SK-N-SH (cell line): ENCODE measurements at regions of chr7 and their contacts with region 1.

Region 1: GRCh38 chr7:22110227-22110839 is 164.6 kb upstream of the CDCA7L start:
- DNase-seq: peak; percentile 74
- H3K4me3 ChIP-seq: no peak overlapping the region; a peak in 1 of 4 replicates
- H3K27ac ChIP-seq: no peak overlapping the region
- H3K4me1 ChIP-seq: peaks cover 0 to 7% of the 10 kb centered on the region in 2 experiments; a peak in 1 of 4 replicates
- H3K27me3 ChIP-seq: no peaks in the 10 kb centered on the region
- CTCF ChIP-seq: peak; percentile 99
- EP300 ChIP-seq: no peak
- RAD21 ChIP-seq: peak; percentile 100

Region 2: GRCh38 chr7:21675255-21675654 is 435.1 kb before region 1 on chr7:
- CTCF ChIA-PET with region 1: no interaction called
- POLR2A ChIA-PET with region 1: no interaction called
- DNase-seq: no peak
- H3K4me3 ChIP-seq: no peak overlapping the region
- H3K27ac ChIP-seq: no peak overlapping the region
- H3K4me1 ChIP-seq: no peaks in the 10 kb centered on the region
- H3K27me3 ChIP-seq: no peaks in the 10 kb centered on the region
- CTCF ChIP-seq: no peak
- EP300 ChIP-seq: no peak
- RAD21 ChIP-seq: no peak

Region 3: GRCh38 chr7:22082886-22083703 is 27.2 kb before region 1 on chr7:
- CTCF ChIA-PET with region 1: interaction called, 90 read pairs
- POLR2A ChIA-PET with region 1: no interaction called
- DNase-seq: peak; percentile 97
- H3K4me3 ChIP-seq: peak overlapping the region; percentile 60 to 78
- H3K27ac ChIP-seq: peak overlapping the region; percentile 51 to 56; a peak in 2 of 4 replicates
- H3K4me1 ChIP-seq: peaks cover 0 to 12% of the 10 kb centered on the region in 2 experiments; a peak in 2 of 4 replicates
- H3K27me3 ChIP-seq: peaks cover 9% of the 10 kb centered on the region; the same call in 1 of the 2 replicates
- CTCF ChIP-seq: peak; percentile 98
- EP300 ChIP-seq: no peak; a peak in 1 of 4 replicates
- RAD21 ChIP-seq: peak; percentile 81

Region 4: GRCh38 chr7:22127835-22128527 is 17.6 kb after region 1 on chr7:
- CTCF ChIA-PET with region 1: interaction called, 52 read pairs
- POLR2A ChIA-PET with region 1: no interaction called
- DNase-seq: no peak
- H3K4me3 ChIP-seq: no peak overlapping the region
- H3K27ac ChIP-seq: peak overlapping the region in 1 of 2 experiments; percentile 3; a peak in 3 of 4 replicates
- H3K4me1 ChIP-seq: peaks cover 6 to 20% of the 10 kb centered on the region in 2 experiments; a peak in 3 of 4 replicates
- H3K27me3 ChIP-seq: no peaks in the 10 kb centered on the region
- CTCF ChIP-seq: no peak
- EP300 ChIP-seq: peak in 1 of 2 experiments; percentile 8; a peak in 1 of 4 replicates
- RAD21 ChIP-seq: no peak

Region 5: GRCh38 chr7:22231811-22232210 is 121.5 kb after region 1 on chr7:
- CTCF ChIA-PET with region 1: interaction called, 12 read pairs
- POLR2A ChIA-PET with region 1: no interaction called
- DNase-seq: no peak
- H3K4me3 ChIP-seq: no peak overlapping the region
- H3K27ac ChIP-seq: no peak overlapping the region
- H3K4me1 ChIP-seq: peaks cover 0 to 3% of the 10 kb centered on the region in 2 experiments; a peak in 1 of 4 replicates
- H3K27me3 ChIP-seq: no peaks in the 10 kb centered on the region
- CTCF ChIP-seq: no peak
- EP300 ChIP-seq: no peak
- RAD21 ChIP-seq: no peak

Region 6: DNA sequence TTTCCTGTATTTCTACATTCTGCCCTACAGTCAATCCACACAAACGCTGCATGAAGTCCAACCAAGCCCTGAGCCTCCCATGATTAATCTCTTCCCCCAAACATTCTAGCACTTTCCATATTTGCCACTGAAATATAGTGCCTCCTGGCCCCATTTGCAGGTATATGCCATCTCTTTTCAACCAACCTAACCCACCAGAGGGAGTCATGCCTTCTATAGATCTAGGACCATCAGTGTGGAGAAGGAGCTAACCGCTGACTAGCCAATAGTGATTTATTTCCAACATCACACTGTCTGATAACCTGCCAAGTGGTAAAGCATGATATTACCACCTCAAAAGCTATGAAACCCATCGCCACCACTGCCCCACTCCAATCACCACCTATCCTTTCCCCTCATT is 214.7 kb after region 1 on chr7:
- CTCF ChIA-PET with region 1: interaction called, 19 read pairs
- POLR2A ChIA-PET with region 1: no interaction called
- DNase-seq: no peak
- H3K4me3 ChIP-seq: no peak overlapping the region
- H3K27ac ChIP-seq: no peak overlapping the region
- H3K4me1 ChIP-seq: peaks cover 7 to 11% of the 10 kb centered on the region in 2 experiments
- H3K27me3 ChIP-seq: no peaks in the 10 kb centered on the region
- CTCF ChIP-seq: no peak
- EP300 ChIP-seq: no peak
- RAD21 ChIP-seq: no peak

Region 7: DNA sequence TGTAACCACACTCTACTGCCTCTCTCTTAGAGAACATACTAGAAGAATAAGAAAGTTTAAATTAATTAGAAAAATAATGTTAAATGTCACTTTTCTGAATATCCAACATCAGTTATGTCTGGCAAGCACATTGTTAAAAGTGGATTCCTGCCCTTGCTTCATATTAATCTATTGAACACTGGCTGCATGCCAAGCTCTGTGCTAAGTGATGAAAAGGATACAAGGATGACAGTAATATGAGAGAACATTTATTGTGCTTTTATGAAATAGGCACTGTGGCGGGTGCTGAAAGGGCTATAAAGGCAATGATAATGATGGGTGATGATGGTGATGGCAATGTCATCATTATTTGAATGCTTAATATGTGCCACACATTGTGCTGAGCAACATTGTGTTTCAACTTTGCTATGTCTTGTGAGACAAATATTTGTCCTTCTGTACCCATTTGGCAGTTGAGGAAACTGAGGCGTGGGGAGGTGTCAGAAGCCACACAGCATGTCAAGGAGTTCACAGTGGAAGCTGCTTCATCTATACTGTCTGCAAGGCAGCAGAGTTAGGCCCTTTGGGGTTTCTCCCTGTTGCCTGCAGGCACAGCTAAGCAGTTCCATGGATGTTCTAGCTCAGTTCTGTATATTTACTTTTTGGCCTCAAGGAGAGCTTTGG is 310.8 kb after region 1 on chr7:
- CTCF ChIA-PET with region 1: interaction called, 19 read pairs
- POLR2A ChIA-PET with region 1: no interaction called
- DNase-seq: no peak
- H3K4me3 ChIP-seq: no peak overlapping the region
- H3K27ac ChIP-seq: no peak overlapping the region
- H3K4me1 ChIP-seq: peaks cover 0 to 10% of the 10 kb centered on the region in 2 experiments; a peak in 2 of 4 replicates
- H3K27me3 ChIP-seq: no peaks in the 10 kb centered on the region
- CTCF ChIP-seq: no peak
- EP300 ChIP-seq: 0 out of 4 replicates have a peak, but pooled peaks of 1 of the 2 experiments have one; percentile 11
- RAD21 ChIP-seq: no peak

Region 8: DNA sequence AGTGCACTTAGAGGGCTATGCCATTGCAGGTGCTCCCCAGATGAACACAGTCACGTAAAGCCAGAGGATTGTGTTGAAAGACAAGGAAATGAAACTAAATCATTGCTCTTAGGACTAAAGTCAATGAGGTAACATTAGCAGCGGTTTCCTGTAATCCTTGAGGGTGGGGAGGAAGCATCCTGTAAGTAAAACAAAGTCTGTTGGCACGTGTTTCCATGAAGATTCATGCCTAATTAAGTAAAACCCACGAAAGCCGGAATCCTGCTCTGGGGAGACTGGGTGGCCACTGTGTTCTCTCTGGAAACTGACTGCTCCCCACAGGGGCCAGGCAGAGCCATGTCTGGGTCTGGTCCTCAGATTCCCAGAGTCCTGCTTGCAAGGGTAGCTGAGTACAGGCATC is 371.4 kb after region 1 on chr7:
- CTCF ChIA-PET with region 1: interaction called, 203 read pairs
- POLR2A ChIA-PET with region 1: no interaction called
- DNase-seq: no peak
- H3K4me3 ChIP-seq: no peak overlapping the region
- H3K27ac ChIP-seq: no peak overlapping the region
- H3K4me1 ChIP-seq: peaks cover 14% of the 10 kb centered on the region in 2 experiments; a peak in 3 of 4 replicates
- H3K27me3 ChIP-seq: no peaks in the 10 kb centered on the region
- CTCF ChIP-seq: no peak
- EP300 ChIP-seq: no peak
- RAD21 ChIP-seq: no peak

Region 9: GRCh38 chr7:22860784-22861482 is 750.6 kb after region 1 on chr7:
- CTCF ChIA-PET with region 1: no interaction called
- POLR2A ChIA-PET with region 1: no interaction called
- DNase-seq: peak; percentile 42
- H3K4me3 ChIP-seq: no peak overlapping the region
- H3K27ac ChIP-seq: peak overlapping the region in 1 of 2 experiments; percentile 39; a peak in 2 of 4 replicates
- H3K4me1 ChIP-seq: peaks cover 0 to 7% of the 10 kb centered on the region in 2 experiments; a peak in 2 of 4 replicates
- H3K27me3 ChIP-seq: no peaks in the 10 kb centered on the region
- CTCF ChIP-seq: peak; percentile 61
- EP300 ChIP-seq: no peak
- RAD21 ChIP-seq: peak; percentile 45

Region 10: DNA sequence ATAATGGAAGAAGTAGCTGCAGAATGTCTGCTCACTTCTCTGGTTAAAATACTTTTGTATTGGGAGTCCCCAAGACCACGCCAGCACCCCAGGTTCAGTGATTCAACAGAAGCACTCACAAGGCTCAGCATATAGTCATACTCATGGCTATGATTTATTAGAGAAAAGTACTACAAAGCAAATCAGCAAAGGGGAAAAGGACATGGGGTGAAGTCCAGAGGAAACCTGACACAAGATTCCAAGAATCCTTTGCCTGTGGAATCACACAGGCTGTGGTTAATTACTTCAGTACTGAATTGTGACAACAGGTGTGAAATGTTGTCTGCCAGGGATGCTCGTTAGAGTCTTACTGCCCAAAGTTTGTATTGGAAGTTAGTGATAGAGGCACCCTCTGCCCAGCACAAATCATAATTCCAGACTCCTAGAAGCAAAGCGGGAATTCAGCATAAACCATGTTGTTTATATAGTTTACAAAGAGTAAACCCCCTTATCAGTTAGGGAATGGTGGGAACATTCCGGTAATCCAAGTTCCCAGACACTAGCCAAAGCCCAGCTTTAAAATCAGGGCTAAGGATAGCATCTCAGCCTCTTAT is 824.2 kb after region 1 on chr7:
- CTCF ChIA-PET with region 1: no interaction called
- POLR2A ChIA-PET with region 1: no interaction called
- DNase-seq: no peak
- H3K4me3 ChIP-seq: no peak overlapping the region
- H3K27ac ChIP-seq: no peak overlapping the region
- H3K4me1 ChIP-seq: no peaks in the 10 kb centered on the region
- H3K27me3 ChIP-seq: peaks cover 13% of the 10 kb centered on the region; the same call in 1 of the 2 replicates
- CTCF ChIP-seq: no peak
- EP300 ChIP-seq: no peak
- RAD21 ChIP-seq: no peak

Region 11: GRCh38 chr7:23181684-23182553 is 1071.6 kb after region 1 on chr7 and contains the start of gene NUP42:
- CTCF ChIA-PET with region 1: no interaction called
- POLR2A ChIA-PET with region 1: no interaction called
- DNase-seq: peak; percentile 97
- H3K4me3 ChIP-seq: peak within 1 kb of the TSS; percentile 89 to 94
- H3K27ac ChIP-seq: peak within 1 kb of the TSS; percentile 88 to 96
- H3K4me1 ChIP-seq: peaks cover 8 to 13% of the 10 kb centered on the region in 2 experiments; a peak in 3 of 4 replicates
- H3K27me3 ChIP-seq: no peaks in the 10 kb centered on the region
- CTCF ChIP-seq: no peak
- EP300 ChIP-seq: peak; percentile 8 to 80; a peak in 3 of 4 replicates
- RAD21 ChIP-seq: peak; percentile 33
- polyA plus RNA-seq, gene NUP42: 22.7 and 38.1 TPM in 2 replicates